Naive thymus-derived CD8-positive, alpha-beta T cell (primary cell): ENCODE measurements at regions of chr12 and their contacts with region 1.

Region 1: DNA sequence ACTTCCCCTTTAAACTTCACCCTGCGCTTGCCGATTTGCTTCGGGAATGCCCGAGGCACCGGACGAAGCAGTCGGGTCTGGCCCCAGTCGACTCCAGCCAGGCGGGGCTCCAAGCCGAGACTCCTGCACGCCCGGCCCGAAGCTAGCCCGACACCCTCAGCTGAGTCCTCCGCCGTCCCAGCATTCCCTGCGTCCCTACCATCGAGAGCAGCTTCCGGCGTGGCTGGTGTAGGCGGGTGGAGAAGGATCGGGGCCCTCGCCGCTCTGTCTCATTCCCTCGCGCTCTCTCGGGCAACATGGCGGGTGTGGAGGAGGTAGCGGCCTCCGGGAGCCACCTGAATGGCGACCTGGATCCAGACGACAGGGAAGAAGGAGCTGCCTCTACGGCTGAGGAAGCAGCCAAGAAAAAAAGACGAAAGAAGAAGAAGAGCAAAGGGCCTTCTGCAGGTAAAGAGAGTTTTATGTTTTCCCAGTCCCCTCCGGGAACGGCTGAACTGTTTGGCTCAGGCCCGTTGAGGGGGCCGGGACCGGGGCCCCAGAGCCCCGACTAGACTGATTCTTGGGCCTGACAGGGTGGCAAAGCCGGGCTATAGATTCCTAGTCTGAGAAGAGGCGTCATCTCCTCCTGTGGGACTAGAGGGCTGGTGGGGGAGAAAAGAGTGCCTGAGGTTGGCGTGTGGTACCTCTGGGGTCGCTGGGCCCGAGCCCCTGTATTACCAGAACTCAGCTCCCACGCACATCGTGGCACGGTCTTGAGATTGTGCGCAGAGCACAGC is at the start of gene METAP2:
- DNase-seq: peak; percentile 76 to 91 (median 88)
- ATAC-seq: peak; percentile 95 to 97
- H3K4me3 Mint-ChIP-seq: peak within 1 kb of the TSS; percentile 89 to 100 (median 100)
- H3K27ac Mint-ChIP-seq: peak within 1 kb of the TSS; percentile 95 to 100 (median 100)
- H3K4me1 Mint-ChIP-seq: peaks cover 19 to 61% (median 58%) of the 10 kb centered on the region in 4 donors
- H3K27me3 Mint-ChIP-seq: no peaks in the 10 kb centered on the region
- polyA plus RNA-seq, gene METAP2: 35.9 to 40.3 (median 38.6) TPM

Region 2: DNA sequence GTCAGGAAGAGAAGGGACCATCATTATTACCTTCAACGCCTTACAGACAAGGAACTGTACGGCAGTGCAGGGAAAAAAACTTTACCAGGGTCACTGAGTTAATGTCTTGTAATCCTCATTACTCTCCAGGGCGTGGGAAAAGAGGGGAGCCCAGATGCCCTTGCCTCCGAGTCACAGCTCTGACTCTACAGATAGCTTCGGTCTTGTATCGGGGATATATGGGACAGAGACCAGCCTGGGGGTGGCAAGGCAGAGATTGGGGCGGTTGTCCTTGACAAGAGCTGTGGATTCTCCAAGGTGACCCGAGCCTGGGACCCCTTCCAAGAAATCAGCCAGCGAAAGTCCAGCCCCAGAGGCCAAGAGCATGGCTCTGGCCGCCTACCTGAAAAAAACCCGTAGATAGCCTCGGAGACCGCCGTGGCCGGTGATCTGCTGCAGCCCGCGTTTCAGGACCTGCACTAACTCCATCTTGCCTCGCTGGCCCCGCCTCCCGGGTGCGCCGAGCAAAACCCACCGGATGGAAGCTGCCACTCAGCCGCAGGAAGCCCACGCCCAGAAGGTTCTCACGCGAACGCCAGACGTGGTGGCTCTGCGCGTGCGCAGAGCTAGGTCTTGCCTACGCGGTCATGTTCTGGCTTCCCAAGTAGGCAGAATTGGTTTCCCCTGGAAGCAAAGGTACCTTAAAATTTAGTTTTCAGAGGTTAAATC is 470.7 kb before region 1 on chr12 and contains the start of gene NDUFA12:
- POLR2A ChIA-PET with region 1: interaction called, 14 read pairs
- DNase-seq: peak; percentile 87 to 97 (median 92)
- ATAC-seq: peak; percentile 99
- H3K4me3 Mint-ChIP-seq: peak within 1 kb of the TSS; percentile 93 to 95 (median 94)
- H3K27ac Mint-ChIP-seq: peak within 1 kb of the TSS; percentile 90 to 97 (median 94)
- H3K4me1 Mint-ChIP-seq: peaks cover 26 to 66% (median 59%) of the 10 kb centered on the region in 4 donors
- H3K27me3 Mint-ChIP-seq: no peaks in the 10 kb centered on the region
- polyA plus RNA-seq, gene NDUFA12: 282 to 364 (median 294) TPM

Region 3: DNA sequence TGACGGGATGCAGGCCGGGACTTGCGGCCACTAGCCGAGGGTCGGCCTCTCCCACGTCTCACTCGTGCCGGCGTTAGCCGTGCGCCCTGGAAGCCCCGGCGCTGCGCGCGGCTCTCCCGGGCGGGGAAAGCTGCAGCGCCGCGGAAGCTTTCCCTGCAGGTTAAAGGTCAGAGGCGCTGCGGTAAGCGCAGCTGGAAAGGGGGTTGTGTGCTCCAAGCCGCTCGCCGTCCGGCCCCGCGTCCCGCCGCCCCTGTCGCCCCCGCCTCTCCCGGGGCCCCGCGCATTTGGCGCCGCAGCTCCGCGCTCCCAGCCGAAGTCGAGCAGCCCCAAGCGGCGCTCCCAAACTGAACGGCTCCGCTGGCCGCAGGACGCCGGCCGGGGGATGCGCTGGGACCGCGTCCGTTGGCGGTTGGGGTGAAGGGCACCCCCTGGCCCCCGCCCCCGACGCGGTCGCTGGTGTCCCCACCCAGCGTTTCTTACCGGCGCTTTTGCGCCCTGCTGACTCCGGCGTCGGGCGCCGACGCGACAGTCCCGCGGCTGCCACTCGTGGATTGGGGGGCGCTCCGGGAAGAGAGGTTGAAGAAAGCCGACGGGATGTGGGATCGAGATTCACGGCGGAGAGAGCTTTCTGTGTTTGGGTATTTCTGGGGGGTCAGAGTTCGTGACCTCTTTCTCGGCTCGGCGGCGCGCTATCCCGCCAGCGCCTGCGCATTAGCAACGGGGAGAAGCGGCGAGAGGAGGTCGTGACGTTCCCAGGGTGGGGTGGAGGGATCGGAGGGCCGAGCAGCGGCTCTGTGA is 401.0 kb before region 1 on chr12 and contains the start of gene NR2C1:
- POLR2A ChIA-PET with region 1: interaction called, 12 read pairs
- DNase-seq: peak; percentile 80 to 96 (median 92)
- ATAC-seq: peak; percentile 98
- H3K4me3 Mint-ChIP-seq: peak within 1 kb of the TSS; percentile 86 to 99 (median 94)
- H3K27ac Mint-ChIP-seq: peak within 1 kb of the TSS; percentile 79 to 96 (median 94)
- H3K4me1 Mint-ChIP-seq: peaks cover 7 to 34% (median 17%) of the 10 kb centered on the region in 4 donors
- H3K27me3 Mint-ChIP-seq: no peaks in the 10 kb centered on the region
- polyA plus RNA-seq, gene NR2C1: 3.3 to 7.1 (median 5.9) TPM

Region 4: GRCh38 chr12:95217377-95218149 is 256.5 kb before region 1 on chr12 and contains the starts of genes FGD6 and VEZT:
- POLR2A ChIA-PET with region 1: interaction called, 30 read pairs
- DNase-seq: peak; percentile 93 to 99 (median 98)
- ATAC-seq: peak; percentile 89 to 92
- H3K4me3 Mint-ChIP-seq: peak within 1 kb of the TSS; percentile 84 to 100 (median 98)
- H3K27ac Mint-ChIP-seq: peak within 1 kb of the TSS; percentile 93 to 100 (median 98)
- H3K4me1 Mint-ChIP-seq: peaks cover 14 to 42% (median 27%) of the 10 kb centered on the region in 4 donors
- H3K27me3 Mint-ChIP-seq: peaks cover 0 to 8% (median 4%) of the 10 kb centered on the region in 5 donors
- polyA plus RNA-seq, gene FGD6: 0.04 to 0.16 TPM in 2 of 3 donors, not detected in the other
- polyA plus RNA-seq, gene VEZT: 17.4 to 22.7 (median 19.4) TPM

Region 5: GRCh38 chr12:95494888-95495287 is 20.8 kb after region 1 on chr12:
- POLR2A ChIA-PET with region 1: no interaction called
- DNase-seq: no peak
- ATAC-seq: no peak
- H3K4me3 Mint-ChIP-seq: no peak overlapping the region
- H3K27ac Mint-ChIP-seq: peak overlapping the region in 3 of 10 donors; percentile 12 to 79 (median 48)
- H3K4me1 Mint-ChIP-seq: peaks cover 7 to 14% (median 13%) of the 10 kb centered on the region in 4 donors
- H3K27me3 Mint-ChIP-seq: no peaks in the 10 kb centered on the region

Region 6: DNA sequence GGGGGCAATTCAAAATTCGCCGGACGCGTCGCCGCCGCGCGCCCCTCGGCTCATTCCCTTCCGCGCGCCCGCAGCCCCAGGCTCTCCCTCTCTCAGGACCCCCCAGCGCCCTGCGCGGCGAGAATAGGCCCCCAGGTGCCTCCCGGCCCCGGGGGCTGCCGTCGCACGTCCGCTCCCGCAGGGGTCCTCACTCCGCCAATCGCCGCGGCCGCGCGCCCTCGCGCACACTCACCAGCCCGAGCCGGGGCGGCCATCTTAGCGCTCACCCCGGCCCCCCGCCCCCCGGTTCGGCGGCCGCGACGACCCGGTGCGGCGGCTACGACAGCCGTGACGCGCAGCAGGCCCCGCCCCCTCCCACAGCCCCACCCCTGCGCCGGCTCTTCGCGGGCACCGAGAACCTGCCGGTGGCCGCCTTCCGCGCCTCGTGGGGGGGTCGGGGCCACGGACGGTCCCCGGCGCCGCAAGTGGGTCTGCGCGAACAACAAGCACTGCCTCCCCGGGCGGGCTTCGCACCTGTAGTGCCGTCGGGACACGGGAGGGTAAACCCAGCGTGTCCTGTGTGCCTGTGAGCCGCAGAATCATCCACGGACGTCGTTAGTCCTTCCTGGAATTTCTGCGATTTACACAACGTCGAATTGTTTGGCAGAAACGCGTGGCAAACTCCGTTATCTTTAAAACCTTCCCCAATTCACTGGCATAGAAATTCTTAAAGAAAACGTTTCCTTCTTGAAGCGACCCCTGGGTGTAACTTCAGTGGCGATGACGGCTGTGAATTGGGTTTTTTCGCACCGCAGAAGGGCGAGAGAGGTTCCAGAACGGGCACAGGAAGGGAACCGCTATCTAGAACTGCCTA is 74.7 kb after region 1 on chr12:
- POLR2A ChIA-PET with region 1: interaction called, 18 read pairs
- DNase-seq: peak; percentile 65 to 88 (median 76)
- ATAC-seq: peak; percentile 75 to 78
- H3K4me3 Mint-ChIP-seq: peak overlapping the region; percentile 89 to 95 (median 94)
- H3K27ac Mint-ChIP-seq: peak overlapping the region; percentile 82 to 100 (median 96)
- H3K4me1 Mint-ChIP-seq: peaks cover 29 to 71% (median 57%) of the 10 kb centered on the region in 4 donors
- H3K27me3 Mint-ChIP-seq: peaks cover 0 to 6% (median 0%) of the 10 kb centered on the region in 5 donors

Region 7: GRCh38 chr12:95942524-95943329 is 468.7 kb after region 1 on chr12 and contains the start of gene CCDC38:
- POLR2A ChIA-PET with region 1: interaction called, 15 read pairs
- DNase-seq: peak; percentile 67 to 91 (median 83)
- ATAC-seq: peak; percentile 91 to 95
- H3K4me3 Mint-ChIP-seq: peak within 1 kb of the TSS; percentile 91 to 98 (median 96)
- H3K27ac Mint-ChIP-seq: peak within 1 kb of the TSS; percentile 89 to 97 (median 92)
- H3K4me1 Mint-ChIP-seq: peaks cover 0 to 9% (median 7%) of the 10 kb centered on the region in 4 donors
- H3K27me3 Mint-ChIP-seq: peaks cover 0 to 1% (median 0%) of the 10 kb centered on the region in 5 donors
- polyA plus RNA-seq, gene CCDC38: not detected